Activated CD4-positive, alpha-beta memory T cell treated with anti-CD3 and anti-CD28 coated beads for 36 hours (primary cell): ENCODE measurements at regions of chr12 and their contacts with region 1.

Region 1: DNA sequence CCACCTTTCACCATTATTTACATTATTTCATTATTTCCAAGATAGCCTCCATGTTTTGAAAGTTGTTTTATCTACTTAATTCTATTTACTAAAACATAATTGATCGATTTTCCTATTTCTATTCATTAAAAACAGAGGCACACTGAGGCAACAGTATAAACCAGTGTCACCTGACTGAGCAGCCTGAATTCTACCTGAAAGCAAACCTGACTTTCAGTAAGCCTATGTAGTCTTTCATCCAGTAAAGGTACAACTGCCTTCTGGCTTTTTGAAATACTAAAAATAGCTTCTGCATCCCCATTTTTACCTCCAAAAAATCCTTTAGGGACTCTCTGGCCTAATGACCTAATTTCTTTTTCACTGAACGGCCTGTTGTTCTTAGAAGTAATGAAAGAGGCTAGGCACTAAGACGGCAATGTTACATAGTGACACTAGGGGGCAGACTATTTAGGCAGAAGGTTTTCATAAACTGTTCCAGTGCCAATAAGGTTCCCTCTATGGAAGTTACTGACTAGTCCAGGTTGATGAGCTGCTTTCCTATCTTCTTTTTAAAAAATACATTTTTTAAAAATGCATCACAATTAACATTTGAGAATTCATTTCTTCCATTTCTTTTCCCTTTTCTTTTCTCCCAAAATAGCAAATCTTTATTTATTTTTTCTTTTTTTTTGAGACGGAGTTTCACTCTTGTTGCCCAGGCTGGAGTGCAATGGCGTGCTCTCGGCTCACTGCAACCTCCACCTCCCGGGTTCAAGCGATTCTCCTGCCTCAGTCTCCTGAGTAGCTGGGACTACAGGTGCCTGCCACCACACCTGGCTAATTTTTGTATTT is 17.5 kb downstream of the ANAPC5 start:
- DNase-seq: no peak
- H3K4me3 Mint-ChIP-seq: no peak overlapping the region
- H3K27ac Mint-ChIP-seq: no peak overlapping the region
- H3K4me1 Mint-ChIP-seq: no peaks in the 10 kb centered on the region
- H3K27me3 Mint-ChIP-seq: no peaks in the 10 kb centered on the region

Region 2: DNA sequence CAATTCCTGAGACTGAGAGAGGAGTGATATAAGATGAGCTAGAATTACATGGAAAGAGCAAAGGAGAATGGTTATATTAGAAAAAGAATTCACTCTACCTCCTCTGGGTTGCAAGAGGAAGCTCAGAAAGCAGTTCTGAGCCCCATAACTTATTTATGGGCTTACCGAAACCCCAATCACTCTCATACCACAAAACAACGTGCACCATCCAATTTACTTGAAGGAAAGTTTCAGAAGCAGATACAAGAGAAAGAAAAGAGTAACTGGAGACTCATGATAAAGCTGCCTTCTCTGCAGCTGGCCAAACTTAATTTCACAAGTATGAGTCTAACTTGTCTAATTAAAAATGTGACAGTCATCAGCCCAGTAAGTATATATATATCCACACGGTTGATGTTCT is 10.8 kb before region 1 on chr12:
- CTCF ChIA-PET with region 1: interaction called, 20 read pairs
- POLR2A ChIA-PET with region 1: no interaction called
- intact Hi-C with region 1: no loop called
- DNase-seq: no peak
- H3K4me3 Mint-ChIP-seq: no peak overlapping the region
- H3K27ac Mint-ChIP-seq: peak overlapping the region; percentile 0
- H3K4me1 Mint-ChIP-seq: no peaks in the 10 kb centered on the region
- H3K27me3 Mint-ChIP-seq: no peaks in the 10 kb centered on the region

Region 3: DNA sequence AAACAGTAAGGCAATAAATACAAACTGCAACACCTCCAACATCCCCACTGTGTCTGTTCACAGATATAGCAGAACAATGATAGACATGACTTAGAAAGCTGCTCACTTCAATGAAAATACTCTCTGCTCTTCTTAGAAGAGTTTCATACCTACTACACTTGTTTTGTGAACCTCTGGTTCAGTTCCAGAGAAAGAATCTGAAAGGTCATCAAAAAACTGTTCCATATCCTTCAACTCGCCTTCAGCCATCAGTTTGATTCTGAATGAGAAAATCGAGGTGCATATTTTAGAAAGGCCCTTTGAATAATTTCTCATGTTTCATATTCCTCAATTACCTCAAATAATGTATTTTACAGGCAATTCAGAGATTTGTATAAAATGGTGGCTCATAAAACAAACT is 12.0 kb after region 1 on chr12:
- CTCF ChIA-PET with region 1: interaction called, 14 read pairs
- POLR2A ChIA-PET with region 1: interaction called, 3 read pairs
- intact Hi-C with region 1: no loop called
- DNase-seq: no peak
- H3K4me3 Mint-ChIP-seq: no peak overlapping the region
- H3K27ac Mint-ChIP-seq: no peak overlapping the region
- H3K4me1 Mint-ChIP-seq: peaks cover 26% of the 10 kb centered on the region
- H3K27me3 Mint-ChIP-seq: no peaks in the 10 kb centered on the region

Region 4: GRCh38 chr12:121351820-121352681 is 17.3 kb after region 1 on chr12 and contains the start of gene ANAPC5:
- CTCF ChIA-PET with region 1: interaction called, 14 read pairs
- POLR2A ChIA-PET with region 1: interaction called, 3 read pairs
- intact Hi-C with region 1: no loop called
- DNase-seq: peak; percentile 96
- H3K4me3 Mint-ChIP-seq: peak within 1 kb of the TSS; percentile 90
- H3K27ac Mint-ChIP-seq: peak within 1 kb of the TSS; percentile 86
- H3K4me1 Mint-ChIP-seq: peaks cover 24% of the 10 kb centered on the region
- H3K27me3 Mint-ChIP-seq: no peaks in the 10 kb centered on the region
- total RNA-seq, gene ANAPC5: 112 to 120 TPM

Region 5: DNA sequence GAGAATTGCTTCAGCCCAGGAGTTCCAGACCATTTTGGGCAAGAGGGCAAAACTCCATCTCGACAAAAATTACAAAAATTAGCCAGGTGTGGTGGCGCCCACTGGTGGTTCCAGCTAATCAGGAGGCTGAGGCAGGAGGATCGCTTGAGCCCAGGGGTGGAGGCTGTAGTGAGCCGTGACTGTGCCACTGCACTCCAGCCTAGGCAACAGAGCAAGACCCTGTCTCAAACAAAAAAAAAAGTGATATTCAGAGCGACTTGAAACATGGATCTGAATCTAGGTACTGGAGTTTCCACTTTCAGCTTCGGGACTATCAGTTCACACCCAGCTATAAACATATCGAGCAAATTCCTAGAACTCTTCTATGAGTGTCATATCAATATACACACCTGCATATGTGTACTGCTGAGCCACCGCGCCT is 48.9 kb after region 1 on chr12:
- CTCF ChIA-PET with region 1: interaction called, 11 read pairs
- POLR2A ChIA-PET with region 1: no interaction called
- intact Hi-C with region 1: no loop called
- DNase-seq: no peak
- H3K4me3 Mint-ChIP-seq: no peak overlapping the region
- H3K27ac Mint-ChIP-seq: no peak overlapping the region
- H3K4me1 Mint-ChIP-seq: peaks cover 3% of the 10 kb centered on the region
- H3K27me3 Mint-ChIP-seq: peaks cover 4% of the 10 kb centered on the region

Region 6: GRCh38 chr12:121404734-121405133 is 70.0 kb after region 1 on chr12:
- CTCF ChIA-PET with region 1: interaction called, 19 read pairs
- POLR2A ChIA-PET with region 1: interaction called, 5 read pairs
- intact Hi-C with region 1: loop called (anchors 2 kb)
- DNase-seq: no peak
- H3K4me3 Mint-ChIP-seq: no peak overlapping the region
- H3K27ac Mint-ChIP-seq: no peak overlapping the region
- H3K4me1 Mint-ChIP-seq: peaks cover 49% of the 10 kb centered on the region
- H3K27me3 Mint-ChIP-seq: no peaks in the 10 kb centered on the region

Region 7: DNA sequence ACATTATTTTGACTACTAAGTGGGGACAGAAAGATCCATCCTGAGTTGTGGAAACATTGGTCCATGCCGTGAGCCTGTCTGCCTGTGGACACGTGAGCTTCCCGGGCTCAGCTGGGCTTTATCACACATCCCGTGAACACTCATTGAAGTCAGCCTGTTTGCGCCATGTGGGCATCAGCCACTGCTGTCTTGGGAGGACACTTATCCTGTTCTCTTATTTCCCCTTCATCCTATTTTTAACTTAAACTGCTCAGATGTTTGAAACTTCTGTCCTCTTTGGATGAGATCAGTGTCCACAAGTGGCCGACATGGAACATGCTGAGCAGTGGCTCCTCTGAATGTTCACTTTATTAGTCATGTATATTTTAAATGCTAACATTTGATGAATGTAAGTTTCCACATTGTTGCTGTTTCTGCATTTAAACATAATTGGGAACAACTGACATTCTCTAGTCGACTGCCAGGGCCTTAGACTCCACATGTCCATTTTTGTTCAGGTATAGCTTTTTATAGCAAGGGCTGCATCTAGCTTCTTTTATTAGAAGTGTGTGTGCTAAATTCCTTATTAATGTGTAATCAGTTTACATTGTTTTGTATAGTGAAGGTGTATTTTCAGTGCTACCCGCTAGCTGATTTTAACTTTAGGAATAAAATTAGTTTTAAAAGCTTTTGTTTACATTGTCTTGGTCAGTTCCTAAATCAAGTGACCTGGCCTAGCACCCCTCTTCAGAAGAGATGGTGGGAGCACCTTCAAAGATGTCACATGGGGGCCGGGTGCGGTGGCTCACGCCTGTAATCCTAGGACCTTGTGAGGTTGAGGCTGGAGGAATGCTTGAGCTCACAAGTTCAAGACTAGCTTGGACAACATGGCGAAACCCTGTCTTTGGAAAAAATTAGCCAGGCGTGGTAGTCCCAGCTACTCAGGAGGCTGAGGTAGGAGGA is 89.2 kb after region 1 on chr12:
- CTCF ChIA-PET with region 1: interaction called, 10 read pairs
- POLR2A ChIA-PET with region 1: interaction called, 5 read pairs
- intact Hi-C with region 1: no loop called
- DNase-seq: no peak
- H3K4me3 Mint-ChIP-seq: no peak overlapping the region
- H3K27ac Mint-ChIP-seq: no peak overlapping the region
- H3K4me1 Mint-ChIP-seq: no peaks in the 10 kb centered on the region
- H3K27me3 Mint-ChIP-seq: no peaks in the 10 kb centered on the region

Region 8: DNA sequence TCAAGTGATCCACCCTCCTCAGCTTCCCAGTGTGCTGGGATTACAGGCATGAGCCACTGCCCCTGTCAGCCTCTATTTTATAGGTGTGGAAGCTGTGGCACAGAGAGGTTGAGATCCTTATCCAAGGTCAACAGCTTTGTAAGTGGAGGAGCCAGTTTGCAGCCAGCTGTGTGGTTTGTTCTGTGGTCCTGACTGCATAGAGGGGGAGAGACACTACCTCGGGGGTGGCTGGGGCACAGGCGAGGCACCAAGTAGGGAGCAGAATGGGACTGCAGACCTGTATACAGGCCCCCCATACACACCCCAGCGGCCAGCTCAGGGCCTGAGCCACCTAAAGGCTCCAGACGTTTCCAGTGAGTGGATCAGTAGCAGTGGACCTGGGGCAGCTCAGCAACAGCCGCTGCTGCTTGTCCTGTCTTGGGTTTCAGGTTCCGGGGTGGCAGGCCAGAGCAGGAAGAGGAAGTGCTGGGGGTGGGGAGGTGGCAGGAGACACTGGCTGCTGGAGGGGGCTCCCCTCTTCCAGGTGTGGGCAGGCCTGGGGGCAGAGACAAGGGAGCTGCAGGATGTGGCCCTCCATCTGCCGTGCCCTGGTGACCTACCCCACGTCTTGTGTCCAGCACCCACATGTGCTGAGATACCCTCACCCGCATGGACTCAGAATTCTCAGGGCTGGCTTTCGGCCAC is 302.6 kb after region 1 on chr12:
- CTCF ChIA-PET with region 1: no interaction called
- POLR2A ChIA-PET with region 1: no interaction called
- intact Hi-C with region 1: no loop called
- DNase-seq: peak; percentile 79
- H3K4me3 Mint-ChIP-seq: peak overlapping the region; percentile 45
- H3K27ac Mint-ChIP-seq: peak overlapping the region; percentile 90
- H3K4me1 Mint-ChIP-seq: peaks cover 47% of the 10 kb centered on the region
- H3K27me3 Mint-ChIP-seq: no peaks in the 10 kb centered on the region